Gastrocnemius medialis (tissue), 4 donors: ENCODE measurements at regions of chr18 and their contacts with region 1.

Region 1: DNA sequence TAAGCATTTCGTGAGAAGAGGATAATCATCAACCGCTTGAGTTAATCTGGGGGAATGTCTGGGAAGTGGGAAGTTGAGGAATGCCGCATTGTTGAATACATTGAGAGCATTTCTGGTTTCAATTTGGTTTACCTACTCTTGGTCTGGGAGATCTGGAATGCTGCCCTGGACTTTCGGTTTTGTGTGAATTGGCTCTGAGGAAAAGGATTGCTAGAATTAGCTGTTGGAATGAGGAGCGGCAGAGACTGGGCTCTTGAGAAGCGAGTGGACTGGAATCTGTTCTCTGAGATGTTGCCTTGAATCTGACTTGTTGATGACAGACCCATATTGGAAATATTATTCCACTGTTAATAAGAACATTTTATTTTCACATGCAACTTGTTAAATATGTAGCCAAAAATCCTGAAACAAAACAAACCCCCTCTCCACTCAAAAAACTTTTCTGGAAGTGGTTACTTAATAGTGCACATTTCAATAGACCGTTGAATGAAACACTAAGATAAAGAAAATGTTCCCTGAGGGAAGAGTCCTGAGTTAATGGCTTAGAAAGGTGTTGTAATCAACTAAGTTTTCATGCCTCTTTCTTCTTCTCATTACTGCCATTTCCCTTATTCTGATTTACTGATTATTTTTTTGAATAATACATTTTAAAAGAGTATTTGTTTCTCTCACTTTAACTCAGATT is 50.8 kb downstream of the PTPRM start:
- DNase-seq: no peak
- ATAC-seq: peak in 1 of 2 donors; percentile 42
- H3K4me3 ChIP-seq: no peak overlapping the region
- H3K27ac ChIP-seq: peak overlapping the region in 2 of 4 donors; percentile 4 to 12
- H3K4me1 ChIP-seq: peaks cover 37 to 62% of the 10 kb centered on the region in 2 donors
- H3K27me3 ChIP-seq: no peaks in the 10 kb centered on the region
- CTCF ChIP-seq: no peak
- POLR2A ChIP-seq: no peak

Region 2: DNA sequence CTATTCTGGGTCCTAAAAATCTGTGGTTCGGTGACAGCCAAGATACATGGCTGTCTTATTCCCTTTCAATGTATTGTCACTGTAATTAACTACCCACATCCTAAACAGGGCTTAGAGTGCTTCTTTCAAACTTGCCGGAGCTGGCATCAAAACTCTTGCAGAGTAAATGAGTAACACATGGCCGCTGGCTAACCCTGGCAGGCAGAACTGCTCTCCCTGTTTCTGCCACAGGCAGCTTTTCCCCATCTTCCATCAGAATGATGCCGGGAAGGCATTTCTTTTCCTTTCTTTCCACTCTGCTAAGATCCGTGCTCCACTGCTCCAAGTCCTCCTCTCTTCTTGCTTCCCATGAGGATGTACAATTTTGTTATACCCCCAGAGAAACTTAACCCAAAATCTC is 105.5 kb before region 1 on chr18:
- in situ Hi-C with region 1: loop called in 1 of 4 experiments (anchors 25 kb)
- intact Hi-C with region 1: no loop called
- DNase-seq: no peak
- ATAC-seq: no peak
- H3K4me3 ChIP-seq: no peak overlapping the region
- H3K27ac ChIP-seq: no peak overlapping the region
- H3K4me1 ChIP-seq: peaks cover 6 to 9% of the 10 kb centered on the region in 2 donors
- H3K27me3 ChIP-seq: no peaks in the 10 kb centered on the region
- CTCF ChIP-seq: no peak
- POLR2A ChIP-seq: no peak

Region 3: DNA sequence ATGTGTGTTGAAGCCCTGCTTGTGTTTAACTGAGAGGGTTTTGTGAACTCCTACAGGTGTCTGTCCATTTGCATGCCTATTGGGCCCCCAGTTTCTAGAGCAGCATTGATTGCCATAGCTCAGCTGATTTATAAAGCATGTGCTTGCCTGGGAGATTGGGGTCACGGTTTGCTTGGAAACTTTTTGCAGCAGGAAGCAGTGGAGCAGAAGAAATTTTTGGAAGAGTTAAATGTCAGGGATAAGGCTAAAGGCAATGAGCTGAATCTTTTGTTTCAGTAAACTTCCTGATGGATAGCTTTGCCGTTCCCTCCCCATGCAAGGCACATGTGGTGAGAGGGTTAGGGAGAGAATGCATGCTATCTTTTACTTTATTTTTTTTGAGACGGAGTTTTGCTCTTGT is 51.5 kb after region 1 on chr18:
- in situ Hi-C with region 1: no loop called
- intact Hi-C with region 1: loop called (anchors 1 kb)
- DNase-seq: no peak
- ATAC-seq: no peak
- H3K4me3 ChIP-seq: no peak overlapping the region
- H3K27ac ChIP-seq: no peak overlapping the region
- H3K4me1 ChIP-seq: peaks cover 16 to 34% of the 10 kb centered on the region in 2 donors
- H3K27me3 ChIP-seq: no peaks in the 10 kb centered on the region
- CTCF ChIP-seq: no peak
- POLR2A ChIP-seq: no peak